Activated CD8-positive, alpha-beta T cell treated with anti-CD3 and anti-CD28 coated beads, Interleukin-2, amount 10 ng/mL, durations not matched to agents 7 days and 5 days (primary cell): ENCODE measurements at regions of chr17 and their contacts with region 1.

Region 1: DNA sequence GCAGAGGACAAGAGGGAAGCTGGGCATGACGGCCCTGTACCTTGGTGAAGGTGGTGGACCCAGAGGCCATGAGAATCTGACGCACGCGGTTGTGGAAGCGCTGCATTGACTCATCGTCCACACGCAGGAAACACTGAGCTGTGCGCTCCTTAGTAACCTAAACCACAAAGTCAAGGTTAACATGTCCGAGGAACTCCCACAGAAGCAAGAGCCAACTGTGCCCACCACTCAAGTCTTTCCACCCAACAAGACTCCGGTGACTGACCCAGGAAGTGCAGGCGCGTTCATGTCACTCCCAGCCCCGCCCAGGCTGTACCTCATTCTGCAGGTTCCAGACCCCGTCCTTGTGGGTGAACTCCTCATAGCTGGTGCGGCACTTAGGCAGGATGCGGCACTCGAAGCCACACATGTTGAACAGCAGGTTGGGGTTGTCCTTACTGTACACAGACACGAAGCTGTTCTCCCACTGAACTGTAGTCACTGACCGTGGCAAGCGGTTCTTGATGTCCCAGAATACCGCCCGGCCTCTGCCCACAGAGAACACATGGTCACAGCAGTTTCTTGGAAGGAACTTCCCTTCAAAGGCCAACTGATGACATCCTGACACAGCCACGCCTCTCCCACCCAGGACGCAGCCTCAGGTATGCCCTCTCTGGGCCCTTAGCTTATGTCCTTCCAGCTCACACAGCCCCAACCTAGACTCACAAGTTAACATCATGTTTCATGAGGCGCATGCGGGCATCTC is 11.5 kb downstream of the PRPF8 start:
- DNase-seq: no peak
- ATAC-seq: peak; percentile 31
- H3K4me3 Mint-ChIP-seq: no peak overlapping the region
- H3K27ac Mint-ChIP-seq: no peak overlapping the region
- H3K4me1 Mint-ChIP-seq: peaks cover 3% of the 10 kb centered on the region
- H3K27me3 Mint-ChIP-seq: no peaks in the 10 kb centered on the region

Region 2: GRCh38 chr17:1684378-1685189 is 11.4 kb after region 1 on chr17 and contains the start of gene PRPF8:
- CTCF ChIA-PET with region 1: interaction called, 17 read pairs
- POLR2A ChIA-PET with region 1: no interaction called
- DNase-seq: peak; percentile 99
- ATAC-seq: peak; percentile 100
- H3K4me3 Mint-ChIP-seq: peak within 1 kb of the TSS; percentile 99
- H3K27ac Mint-ChIP-seq: peak within 1 kb of the TSS; percentile 94
- H3K4me1 Mint-ChIP-seq: peaks cover 33% of the 10 kb centered on the region
- H3K27me3 Mint-ChIP-seq: no peaks in the 10 kb centered on the region
- total RNA-seq, gene PRPF8: 309 to 321 TPM

Region 3: GRCh38 chr17:1736348-1737281 is 63.4 kb after region 1 on chr17:
- CTCF ChIA-PET with region 1: no interaction called
- POLR2A ChIA-PET with region 1: no interaction called
- DNase-seq: no peak
- ATAC-seq: no peak
- H3K4me3 Mint-ChIP-seq: no peak overlapping the region
- H3K27ac Mint-ChIP-seq: no peak overlapping the region
- H3K4me1 Mint-ChIP-seq: peaks cover 11% of the 10 kb centered on the region
- H3K27me3 Mint-ChIP-seq: no peaks in the 10 kb centered on the region

Region 4: GRCh38 chr17:1783834-1784611 is 110.8 kb after region 1 on chr17:
- CTCF ChIA-PET with region 1: interaction called, 11 read pairs
- POLR2A ChIA-PET with region 1: no interaction called
- DNase-seq: no peak
- ATAC-seq: no peak
- H3K4me3 Mint-ChIP-seq: no peak overlapping the region
- H3K27ac Mint-ChIP-seq: peak overlapping the region; percentile 33
- H3K4me1 Mint-ChIP-seq: peaks cover 12% of the 10 kb centered on the region
- H3K27me3 Mint-ChIP-seq: no peaks in the 10 kb centered on the region

Region 5: GRCh38 chr17:1967213-1967612 is 294.0 kb after region 1 on chr17:
- CTCF ChIA-PET with region 1: no interaction called
- POLR2A ChIA-PET with region 1: no interaction called
- DNase-seq: peak; percentile 61
- ATAC-seq: peak; percentile 79
- H3K4me3 Mint-ChIP-seq: no peak overlapping the region
- H3K27ac Mint-ChIP-seq: peak overlapping the region; percentile 60
- H3K4me1 Mint-ChIP-seq: peaks cover 20% of the 10 kb centered on the region
- H3K27me3 Mint-ChIP-seq: peaks cover 4% of the 10 kb centered on the region